Activated CD4-positive, alpha-beta T cell treated with anti-CD3 and anti-CD28 coated beads for 36 hours (primary cell): ENCODE measurements at regions of chrX and their contacts with region 1.

Region 1: GRCh38 chrX:19990556-19991349 is at the start of gene BCLAF3:
- DNase-seq: peak; percentile 92
- ATAC-seq: peak; percentile 98
- H3K4me3 Mint-ChIP-seq: peak within 1 kb of the TSS; percentile 80
- H3K27ac Mint-ChIP-seq: peak within 1 kb of the TSS; percentile 95
- H3K4me1 Mint-ChIP-seq: peaks cover 16% of the 10 kb centered on the region
- H3K27me3 Mint-ChIP-seq: no peaks in the 10 kb centered on the region
- total RNA-seq, gene BCLAF3: 4.3 to 5.7 TPM

Region 2: GRCh38 chrX:19343535-19344408 is 647.0 kb before region 1 on chrX and contains the start of gene PDHA1:
- CTCF ChIA-PET with region 1: no interaction called
- POLR2A ChIA-PET with region 1: no interaction called
- intact Hi-C with region 1: loop called in 1 of 2 experiments (anchors 10 kb)
- DNase-seq: peak; percentile 95
- ATAC-seq: peak; percentile 99
- H3K4me3 Mint-ChIP-seq: peak within 1 kb of the TSS; percentile 79
- H3K27ac Mint-ChIP-seq: peak within 1 kb of the TSS; percentile 88
- H3K4me1 Mint-ChIP-seq: peaks cover 27% of the 10 kb centered on the region
- H3K27me3 Mint-ChIP-seq: no peaks in the 10 kb centered on the region
- total RNA-seq, gene PDHA1: 204 to 217 TPM

Region 3: GRCh38 chrX:19372170-19372546 is 618.6 kb before region 1 on chrX:
- CTCF ChIA-PET with region 1: no interaction called
- POLR2A ChIA-PET with region 1: no interaction called
- intact Hi-C with region 1: loop called in 1 of 2 experiments (anchors 1 kb)
- DNase-seq: peak; percentile 79
- ATAC-seq: peak; percentile 85
- H3K4me3 Mint-ChIP-seq: peak overlapping the region; percentile 69
- H3K27ac Mint-ChIP-seq: peak overlapping the region; percentile 81
- H3K4me1 Mint-ChIP-seq: peaks cover 5% of the 10 kb centered on the region
- H3K27me3 Mint-ChIP-seq: no peaks in the 10 kb centered on the region

Region 4: DNA sequence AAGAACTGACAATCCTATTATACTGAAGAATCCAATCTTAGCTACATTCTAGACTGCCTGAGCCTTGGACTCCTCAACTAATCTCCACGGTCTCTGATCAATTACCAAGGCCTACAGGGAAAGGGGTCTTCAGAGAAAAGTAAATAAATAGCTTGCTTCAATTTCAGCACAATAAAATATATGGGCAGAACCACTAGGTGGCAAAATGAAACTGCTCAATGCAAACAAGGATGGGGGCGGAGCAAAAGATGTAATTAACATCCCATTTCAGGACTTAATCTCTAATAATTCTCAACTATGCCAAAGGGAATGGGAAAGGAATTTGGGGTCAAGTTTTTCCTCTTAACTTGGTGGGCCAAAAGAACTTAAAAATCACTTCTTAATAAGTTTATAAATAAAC is 397.1 kb before region 1 on chrX:
- CTCF ChIA-PET with region 1: no interaction called
- POLR2A ChIA-PET with region 1: no interaction called
- intact Hi-C with region 1: loop called in 1 of 2 experiments (anchors 5 kb)
- DNase-seq: peak; percentile 21
- ATAC-seq: no peak
- H3K4me3 Mint-ChIP-seq: no peak overlapping the region
- H3K27ac Mint-ChIP-seq: no peak overlapping the region
- H3K4me1 Mint-ChIP-seq: peaks cover 14% of the 10 kb centered on the region
- H3K27me3 Mint-ChIP-seq: no peaks in the 10 kb centered on the region

Region 5: DNA sequence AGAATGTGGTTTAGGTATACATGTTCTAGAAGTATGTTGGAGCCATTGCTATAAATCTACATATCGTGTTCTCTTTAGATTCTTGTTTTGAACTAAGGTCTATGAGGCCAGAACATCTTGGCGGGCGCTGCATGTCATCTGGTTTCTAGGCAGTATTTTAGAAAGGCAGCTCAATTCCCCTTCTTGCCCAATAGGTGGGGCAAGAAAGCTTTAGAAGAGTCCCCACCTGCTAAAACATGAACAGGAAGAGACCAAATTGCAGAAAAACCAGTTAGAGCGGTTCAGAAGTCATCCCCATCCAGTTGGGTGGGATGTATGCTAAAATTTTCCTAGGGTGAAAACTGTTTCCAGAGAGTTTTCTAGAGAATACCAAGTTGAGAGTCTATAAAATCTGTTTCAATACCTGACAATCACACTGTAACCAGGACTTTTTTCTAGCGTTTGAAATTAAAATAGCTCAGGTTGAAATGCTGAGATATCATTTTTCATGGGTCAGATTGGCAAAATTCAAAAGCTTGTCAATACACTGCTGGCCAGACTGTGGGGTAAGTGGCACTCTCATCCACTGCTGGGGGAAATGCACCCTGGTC is 85.9 kb before region 1 on chrX:
- CTCF ChIA-PET with region 1: interaction called, 7 read pairs
- POLR2A ChIA-PET with region 1: no interaction called
- intact Hi-C with region 1: loop called (anchors 1 kb)
- DNase-seq: peak; percentile 46
- ATAC-seq: peak; percentile 80
- H3K4me3 Mint-ChIP-seq: no peak overlapping the region
- H3K27ac Mint-ChIP-seq: no peak overlapping the region
- H3K4me1 Mint-ChIP-seq: peaks cover 10% of the 10 kb centered on the region
- H3K27me3 Mint-ChIP-seq: no peaks in the 10 kb centered on the region

Region 6: DNA sequence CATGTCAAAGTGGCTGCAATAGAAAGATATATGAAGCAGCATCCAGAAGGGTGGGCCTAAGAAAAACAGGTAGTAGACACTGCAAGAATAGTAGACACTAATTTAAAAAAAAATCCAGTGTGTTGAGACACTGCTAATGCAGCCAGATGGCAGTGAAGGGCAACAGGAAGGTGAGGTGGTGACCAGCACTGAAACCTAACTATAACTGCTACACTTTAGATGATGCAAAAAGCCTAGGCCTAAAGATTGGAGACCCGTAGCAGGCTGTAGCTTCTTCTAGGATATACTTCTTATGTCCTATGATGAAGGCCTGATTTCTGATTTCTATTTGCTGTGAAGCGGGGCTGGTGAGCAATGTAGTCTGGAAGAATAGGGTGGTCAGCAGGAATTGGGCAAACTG is 64.7 kb before region 1 on chrX:
- CTCF ChIA-PET with region 1: no interaction called
- POLR2A ChIA-PET with region 1: no interaction called
- intact Hi-C with region 1: loop called in 1 of 2 experiments (anchors 5 kb)
- DNase-seq: no peak
- ATAC-seq: no peak
- H3K4me3 Mint-ChIP-seq: no peak overlapping the region
- H3K27ac Mint-ChIP-seq: no peak overlapping the region
- H3K4me1 Mint-ChIP-seq: no peaks in the 10 kb centered on the region
- H3K27me3 Mint-ChIP-seq: no peaks in the 10 kb centered on the region

Region 7: GRCh38 chrX:20141281-20142220 is 150.8 kb after region 1 on chrX and contains the start of gene EIF1AX:
- CTCF ChIA-PET with region 1: no interaction called
- POLR2A ChIA-PET with region 1: no interaction called
- intact Hi-C with region 1: loop called in 1 of 2 experiments (anchors 2 kb)
- DNase-seq: peak; percentile 96
- ATAC-seq: peak; percentile 99
- H3K4me3 Mint-ChIP-seq: peak within 1 kb of the TSS; percentile 79
- H3K27ac Mint-ChIP-seq: peak within 1 kb of the TSS; percentile 84
- H3K4me1 Mint-ChIP-seq: peaks cover 39% of the 10 kb centered on the region
- H3K27me3 Mint-ChIP-seq: no peaks in the 10 kb centered on the region
- total RNA-seq, gene EIF1AX: 81.7 to 140 TPM